Activated CD4-positive, alpha-beta T cell treated with anti-CD3 and anti-CD28 coated beads, Interleukin-2, amount 10 ng/mL, durations not matched to agents 24 days and 14 days (primary cell): ENCODE measurements at regions of chr1 and their contacts with region 1.

Region 1: DNA sequence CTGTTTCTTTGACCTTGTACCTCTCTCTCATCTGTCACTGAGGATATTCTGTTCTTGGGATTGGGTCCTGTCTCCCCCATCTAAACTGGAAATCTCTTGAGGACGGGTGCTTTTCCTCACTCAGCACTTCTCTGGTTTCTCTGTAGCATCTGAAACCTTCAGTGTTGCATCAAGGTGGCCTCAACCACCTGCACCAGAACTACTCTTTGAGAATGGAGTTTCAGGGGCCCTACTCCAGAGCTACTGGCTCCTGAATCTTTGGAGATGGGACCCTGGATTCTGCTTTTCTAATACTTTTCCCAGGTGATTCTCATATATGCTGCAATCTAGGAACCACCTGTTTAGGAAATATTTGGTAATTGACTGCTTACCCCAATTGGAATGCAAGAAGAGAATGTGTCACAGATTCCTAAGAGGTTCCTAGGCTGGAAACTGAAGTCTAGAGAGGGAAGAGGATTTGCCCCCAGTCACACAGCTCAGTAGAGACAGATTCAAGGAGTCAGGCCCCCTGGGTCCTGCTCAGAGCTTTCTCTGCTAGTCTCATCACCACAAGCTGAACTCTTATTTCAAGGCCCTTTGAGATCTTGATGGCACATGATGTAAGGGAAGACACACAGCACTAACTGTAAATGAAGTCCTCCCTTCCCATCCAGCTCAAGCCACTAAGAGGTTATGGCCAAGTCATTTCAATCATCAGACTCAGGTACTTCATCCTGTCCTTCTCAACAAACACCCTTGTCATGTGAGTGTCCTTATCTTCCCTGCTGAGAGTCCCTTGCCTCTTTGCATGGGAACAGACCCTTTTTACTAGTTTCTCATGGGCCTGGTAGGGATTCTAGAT is 48.7 kb downstream of the EIF2D start:
- DNase-seq: no peak
- H3K4me3 Mint-ChIP-seq: peak overlapping the region; percentile 98
- H3K27ac Mint-ChIP-seq: peak overlapping the region; percentile 94
- H3K4me1 Mint-ChIP-seq: peaks cover 90% of the 10 kb centered on the region
- H3K27me3 Mint-ChIP-seq: no peaks in the 10 kb centered on the region

Region 2: GRCh38 chr1:206535853-206536188 is 27.8 kb before region 1 on chr1:
- intact Hi-C with region 1: no loop called
- DNase-seq: no peak
- H3K4me3 Mint-ChIP-seq: no peak overlapping the region
- H3K27ac Mint-ChIP-seq: no peak overlapping the region
- H3K4me1 Mint-ChIP-seq: peaks cover 5% of the 10 kb centered on the region
- H3K27me3 Mint-ChIP-seq: peaks cover 3% of the 10 kb centered on the region

Region 3: DNA sequence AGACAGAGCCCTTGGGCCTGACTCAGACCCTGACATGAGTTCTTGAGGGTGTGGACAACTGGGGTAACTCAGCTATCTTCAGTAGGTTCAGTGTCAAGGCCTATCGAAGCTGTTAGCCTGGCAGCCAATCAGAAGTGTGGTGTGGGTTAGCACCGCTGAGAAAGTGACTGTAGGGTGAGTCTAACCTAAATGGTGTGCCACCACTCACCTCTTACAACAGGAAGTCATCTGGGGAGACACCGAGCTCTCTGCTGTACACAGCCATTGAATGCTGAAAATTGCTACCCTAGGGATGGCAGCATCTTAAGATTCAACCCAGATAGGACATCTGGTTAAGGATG is 11.6 kb before region 1 on chr1:
- intact Hi-C with region 1: loop called (anchors 1 kb)
- DNase-seq: peak; percentile 91
- H3K4me3 Mint-ChIP-seq: peak overlapping the region; percentile 72
- H3K27ac Mint-ChIP-seq: peak overlapping the region; percentile 93
- H3K4me1 Mint-ChIP-seq: peaks cover 56% of the 10 kb centered on the region
- H3K27me3 Mint-ChIP-seq: no peaks in the 10 kb centered on the region

Region 4: DNA sequence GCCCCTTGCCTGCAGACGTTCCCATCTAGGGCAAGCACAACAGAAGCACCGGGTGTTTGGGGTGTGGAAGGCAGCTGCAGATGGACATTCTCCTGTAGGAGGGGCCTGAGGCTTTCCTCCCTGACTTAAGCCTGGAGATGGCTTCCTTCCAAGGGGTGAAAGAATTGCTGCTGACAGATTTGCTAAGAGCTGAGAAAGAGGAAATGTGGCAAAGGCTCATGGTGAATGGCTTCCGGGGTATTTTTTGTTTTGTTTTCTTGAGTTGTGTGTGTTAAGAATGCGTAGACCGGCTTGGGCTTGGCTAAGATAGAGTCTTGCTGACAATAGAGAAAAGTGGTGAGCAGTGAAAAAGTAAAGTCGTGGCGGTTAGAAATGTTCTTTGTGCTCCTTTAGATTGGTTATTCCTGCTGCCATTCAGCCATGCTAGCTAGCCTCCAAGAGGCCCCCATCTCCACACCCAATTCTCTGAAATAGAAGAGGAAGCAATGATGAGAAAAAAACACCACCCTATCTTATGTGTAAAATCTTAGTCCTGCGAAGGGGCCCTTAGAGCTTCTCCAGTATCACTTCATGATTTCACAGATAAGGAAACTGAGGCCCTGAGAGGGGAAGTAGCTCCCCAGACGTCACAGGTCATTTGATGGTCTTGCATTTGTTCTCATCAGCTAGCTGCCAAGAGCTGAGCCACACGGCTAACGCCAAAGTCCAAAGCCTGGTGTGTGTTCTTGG is 11.7 kb after region 1 on chr1:
- intact Hi-C with region 1: loop called (anchors 1 kb)
- DNase-seq: peak; percentile 89
- H3K4me3 Mint-ChIP-seq: peak overlapping the region; percentile 84
- H3K27ac Mint-ChIP-seq: peak overlapping the region; percentile 100
- H3K4me1 Mint-ChIP-seq: peaks cover 93% of the 10 kb centered on the region
- H3K27me3 Mint-ChIP-seq: no peaks in the 10 kb centered on the region

Region 5: GRCh38 chr1:206674745-206675175 is 111.2 kb after region 1 on chr1:
- intact Hi-C with region 1: no loop called
- DNase-seq: no peak
- H3K4me3 Mint-ChIP-seq: no peak overlapping the region
- H3K27ac Mint-ChIP-seq: no peak overlapping the region
- H3K4me1 Mint-ChIP-seq: peaks cover 13% of the 10 kb centered on the region
- H3K27me3 Mint-ChIP-seq: peaks cover 3% of the 10 kb centered on the region